Right ventricle myocardium superior (tissue), 1 donor: ENCODE measurements at regions of chr10 and their contacts with region 1.

Region 1: DNA sequence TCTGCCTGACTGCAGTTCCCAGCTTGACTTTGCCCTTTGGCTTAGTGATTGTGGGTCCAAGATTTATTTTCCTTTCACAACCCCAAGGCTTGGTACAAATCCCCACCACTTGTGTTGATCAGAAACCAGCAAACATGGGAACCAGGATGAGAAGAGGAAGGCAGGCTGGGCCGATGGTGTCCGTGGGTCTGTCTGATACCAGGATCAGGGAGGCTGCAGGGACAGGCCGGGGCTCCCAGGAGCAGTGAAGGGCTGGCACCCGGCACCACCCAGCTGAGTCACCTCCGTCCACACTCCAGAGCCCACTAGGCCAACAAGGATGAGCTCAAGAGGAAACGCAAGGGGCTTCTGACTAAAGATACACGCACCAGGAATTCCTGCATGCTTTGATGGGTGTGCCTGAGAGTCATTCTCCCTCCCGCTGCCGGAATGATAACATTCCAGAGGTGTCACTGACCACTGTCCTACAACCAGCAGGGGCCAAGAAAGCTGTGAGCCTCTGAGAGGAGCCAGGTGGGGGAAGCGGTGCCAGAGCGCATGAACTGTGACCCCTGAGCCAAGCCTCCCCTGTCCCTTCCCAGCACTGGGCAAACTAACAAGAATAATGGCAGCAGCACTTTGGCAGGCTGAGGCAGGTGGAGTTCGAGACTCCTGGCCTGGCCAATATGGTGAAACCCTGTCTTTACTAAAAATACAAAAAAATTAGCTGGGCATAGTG is 29.2 kb upstream of the PROSER2 start:
- DNase-seq: no peak
- ATAC-seq: no peak

Region 2: DNA sequence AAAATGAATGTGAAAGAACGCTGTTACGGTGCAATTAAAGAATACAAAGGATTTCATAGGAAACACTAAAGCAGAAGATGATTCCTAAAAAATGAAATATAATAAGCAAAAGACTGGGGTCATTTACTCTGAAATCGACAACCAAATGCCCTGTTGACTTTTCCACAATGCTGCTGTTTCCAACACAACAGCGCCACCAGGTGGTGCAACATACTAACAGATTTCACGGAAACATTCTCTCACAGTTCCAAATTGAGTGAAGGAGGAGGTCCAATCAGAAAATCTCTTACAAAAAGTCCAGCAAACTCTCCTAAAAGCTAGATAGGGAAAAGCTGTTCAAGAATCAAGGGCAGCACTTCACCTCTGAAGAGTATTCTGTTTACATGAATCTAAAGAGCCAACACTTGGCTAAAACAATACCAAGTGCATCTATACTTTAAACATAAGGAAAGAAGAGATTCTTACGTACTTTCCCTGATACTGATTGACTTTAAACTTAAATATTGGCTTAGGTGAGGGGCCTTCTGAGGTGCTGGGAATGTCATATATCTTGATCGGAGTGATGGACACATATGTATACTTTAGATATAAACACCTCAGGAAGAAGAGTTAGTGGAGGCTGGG is 192.8 kb after region 1 on chr10:
- intact Hi-C with region 1: loop called (anchors 5 kb)
- DNase-seq: peak; percentile 75
- ATAC-seq: peak; percentile 74